BJ (cell line): ENCODE measurements at regions of chr11 and their contacts with region 1.

Region 1: GRCh38 chr11:88552377-88553062 is 215.0 kb upstream of the CTSC start:
- DNase-seq: no peak
- H3K4me3 ChIP-seq: no peak overlapping the region
- H3K27me3 ChIP-seq: no peaks in the 10 kb centered on the region
- CTCF ChIP-seq: peak; percentile 75

Region 2: DNA sequence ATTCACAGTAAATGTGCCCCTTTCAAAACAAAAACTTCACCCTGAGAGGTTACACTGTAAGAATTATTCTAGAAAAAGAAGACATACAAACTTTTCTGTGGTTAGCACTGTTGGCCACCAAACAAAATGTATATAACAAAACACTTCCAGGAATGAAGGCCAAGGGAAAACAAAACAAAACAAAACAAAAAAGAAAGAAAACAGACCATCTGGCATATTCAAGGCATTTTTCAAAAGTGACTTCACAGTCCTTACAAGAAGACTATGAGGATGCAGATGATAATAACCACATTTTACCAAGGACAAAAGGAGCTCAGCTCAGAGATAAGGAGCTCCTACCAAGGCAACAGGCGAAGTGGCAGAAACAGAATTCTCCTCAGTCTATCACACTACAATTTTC is 239.9 kb before region 1 on chr11:
- CTCF ChIA-PET with region 1: no interaction called
- POLR2A ChIA-PET with region 1: no interaction called
- DNase-seq: no peak
- H3K4me3 ChIP-seq: no peak overlapping the region
- H3K27me3 ChIP-seq: no peaks in the 10 kb centered on the region
- CTCF ChIP-seq: no peak

Region 3: DNA sequence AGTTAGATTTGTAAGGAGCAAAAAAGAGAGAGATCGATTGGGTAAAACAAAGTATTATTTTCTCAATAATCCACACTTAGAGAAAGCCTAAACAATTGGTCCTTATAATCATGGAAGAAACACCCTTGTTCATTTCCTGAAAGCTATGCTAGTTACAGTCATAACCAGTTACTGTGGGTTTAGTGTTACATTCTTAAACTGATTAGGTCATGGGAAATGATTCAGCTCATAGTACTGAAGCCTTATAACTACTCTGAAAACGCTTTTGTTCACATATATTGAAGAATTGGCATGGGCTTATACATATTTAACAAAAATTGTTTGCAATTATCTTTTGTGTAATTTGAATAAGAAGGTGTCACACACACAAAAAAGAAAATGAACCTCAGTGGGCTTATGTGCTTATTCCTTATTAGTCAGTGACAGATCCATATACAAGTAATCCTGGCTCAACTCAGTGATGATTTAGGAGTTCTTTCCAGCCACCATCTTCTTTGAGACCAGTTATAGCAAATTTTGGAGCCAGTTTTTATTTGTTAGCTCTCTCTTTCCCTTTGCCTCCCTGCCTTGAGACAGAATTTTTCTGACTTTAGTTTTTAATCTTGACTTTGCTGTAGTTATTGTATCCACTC is 16.5 kb before region 1 on chr11:
- CTCF ChIA-PET with region 1: interaction called, 26 read pairs
- POLR2A ChIA-PET with region 1: no interaction called
- DNase-seq: peak; percentile 77
- H3K4me3 ChIP-seq: no peak overlapping the region
- H3K27me3 ChIP-seq: no peaks in the 10 kb centered on the region
- CTCF ChIP-seq: no peak

Region 4: DNA sequence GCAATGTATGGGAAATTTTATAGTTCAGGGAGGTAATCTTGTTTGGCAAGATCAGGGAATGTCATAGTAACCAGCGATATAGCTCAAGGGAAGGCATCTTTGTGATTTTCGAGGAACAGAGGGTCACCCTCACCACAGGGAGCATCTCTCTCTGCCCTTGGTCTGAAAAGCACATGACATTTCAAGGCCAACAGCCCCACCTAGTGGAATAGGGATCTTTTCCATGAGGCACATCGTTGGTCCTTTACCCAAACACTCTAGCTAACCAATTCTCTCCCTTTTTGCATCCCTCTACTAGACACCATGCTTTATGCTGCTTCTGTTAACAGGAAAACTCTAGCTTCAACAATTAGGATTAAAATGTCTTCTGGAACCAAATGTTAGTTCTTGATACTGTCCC is 334.3 kb after region 1 on chr11:
- CTCF ChIA-PET with region 1: interaction called, 13 read pairs
- POLR2A ChIA-PET with region 1: no interaction called
- DNase-seq: no peak
- H3K4me3 ChIP-seq: no peak overlapping the region
- H3K27me3 ChIP-seq: no peaks in the 10 kb centered on the region
- CTCF ChIP-seq: peak; percentile 40; the same call in 1 of the 2 replicates